ENCODE measurements at regions of chr15 and their contacts with region 1.

Region 1: DNA sequence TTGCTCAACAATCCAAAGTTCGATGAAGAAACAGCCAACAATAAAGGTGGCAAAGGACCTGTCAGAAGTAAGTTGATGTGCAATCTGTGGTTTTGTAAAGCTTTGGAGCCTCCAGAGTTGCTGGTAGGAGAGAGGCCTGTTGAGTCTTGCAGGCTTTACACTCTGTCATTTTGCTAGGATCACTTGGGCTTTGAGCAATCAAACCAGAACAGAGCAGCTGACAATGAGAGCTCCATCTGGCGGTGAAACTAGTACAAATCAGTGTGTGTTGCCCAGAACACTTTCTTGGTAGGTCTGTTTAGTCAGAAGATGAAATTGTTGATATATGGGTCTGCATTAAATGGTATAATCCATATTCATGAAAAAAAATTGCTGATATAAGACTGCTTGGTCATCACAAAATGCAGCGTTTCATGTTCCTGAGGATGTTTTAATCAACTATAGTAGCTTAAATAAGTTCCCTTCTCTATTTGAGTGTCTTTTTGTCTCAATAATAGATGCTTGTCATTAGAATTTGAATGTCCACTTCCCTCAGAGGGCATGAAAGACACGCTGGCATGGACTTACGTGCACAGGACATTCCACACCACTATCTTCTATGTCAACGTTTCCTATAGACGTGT is 25.7 kb downstream of the TMOD2 start:
- DNase-seq: peak; percentile 32 to 83 (median 50)
- ATAC-seq: peak; percentile 85
- H3K4me3 ChIP-seq: no peak overlapping the region
- H3K4me3 Mint-ChIP-seq: no peak overlapping the region
- H3K27ac ChIP-seq: no peak overlapping the region
- H3K27ac Mint-ChIP-seq: no peak overlapping the region
- H3K4me1 ChIP-seq: no peaks in the 10 kb centered on the region
- H3K4me1 Mint-ChIP-seq: peaks cover 9% of the 10 kb centered on the region
- H3K27me3 ChIP-seq: no peaks in the 10 kb centered on the region
- H3K27me3 Mint-ChIP-seq: no peaks in the 10 kb centered on the region
- CTCF ChIP-seq: peak; percentile 70

Region 2: DNA sequence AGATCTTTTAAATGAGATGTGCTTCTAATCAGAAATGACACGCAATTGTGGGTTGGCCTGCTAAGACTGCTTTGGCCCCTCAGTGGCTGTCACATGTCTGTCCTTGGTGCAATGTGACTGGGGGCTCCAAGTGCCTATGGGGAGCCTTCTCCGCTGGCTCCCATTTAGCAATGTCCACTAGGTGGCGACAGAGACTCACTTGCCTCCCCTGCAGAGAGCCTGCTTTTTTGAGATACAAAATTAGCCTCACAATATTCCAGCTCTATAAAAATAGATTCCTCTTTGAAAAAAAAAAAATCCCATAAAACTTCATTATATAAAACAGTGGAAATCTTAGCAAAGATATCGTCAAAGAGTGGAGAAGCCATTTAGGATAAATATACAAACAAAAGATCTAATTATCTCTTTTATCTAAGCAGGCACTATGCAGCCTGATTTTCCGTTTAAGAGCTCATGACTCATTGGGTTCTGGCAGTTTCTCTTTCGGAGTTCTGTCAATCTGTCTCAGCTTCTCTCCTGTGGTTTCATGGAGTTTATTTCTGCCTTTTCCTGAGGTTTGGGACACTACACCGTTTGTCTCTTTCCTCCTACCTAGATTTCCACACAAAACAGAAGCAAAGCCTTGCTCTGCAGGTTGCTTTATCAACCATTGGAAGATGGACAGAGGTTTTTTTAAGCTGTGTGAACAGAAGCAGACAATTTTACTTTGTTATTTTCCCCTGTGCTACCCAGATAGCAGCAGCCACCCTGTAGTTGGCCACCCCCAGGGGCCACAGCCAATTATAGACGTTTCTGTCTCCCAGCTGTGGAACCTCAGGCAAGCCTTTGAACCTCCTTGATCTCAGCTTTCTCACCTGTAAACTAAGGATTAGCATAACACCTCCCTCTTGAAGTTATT is 613.9 kb before region 1 on chr15:
- CTCF ChIA-PET with region 1: interaction called, 5 read pairs
- POLR2A ChIA-PET with region 1: no interaction called
- intact Hi-C with region 1: loop called in 1 of 2 experiments (anchors 5 kb)
- DNase-seq: peak; percentile 14 to 73 (median 32)
- ATAC-seq: peak; percentile 59
- H3K4me3 ChIP-seq: no peak overlapping the region
- H3K4me3 Mint-ChIP-seq: no peak overlapping the region
- H3K27ac ChIP-seq: no peak overlapping the region
- H3K27ac Mint-ChIP-seq: no peak overlapping the region
- H3K4me1 ChIP-seq: no peaks in the 10 kb centered on the region
- H3K4me1 Mint-ChIP-seq: no peaks in the 10 kb centered on the region
- H3K27me3 ChIP-seq: peaks cover 12 to 27% of the 10 kb centered on the region in 2 experiments
- H3K27me3 Mint-ChIP-seq: peaks cover 33% of the 10 kb centered on the region
- CTCF ChIP-seq: peak; percentile 95

Region 3: GRCh38 chr15:51649659-51650521 is 127.2 kb before region 1 on chr15:
- CTCF ChIA-PET with region 1: interaction called, 179 read pairs
- POLR2A ChIA-PET with region 1: interaction called, 32 read pairs
- intact Hi-C with region 1: loop called (anchors 1 kb)
- DNase-seq: peak in 11 of 14 experiments; percentile 3 to 85 (median 37)
- ATAC-seq: peak; percentile 81
- H3K4me3 ChIP-seq: no peak overlapping the region
- H3K4me3 Mint-ChIP-seq: no peak overlapping the region
- H3K27ac ChIP-seq: no peak overlapping the region
- H3K27ac Mint-ChIP-seq: no peak overlapping the region
- H3K4me1 ChIP-seq: no peaks in the 10 kb centered on the region
- H3K4me1 Mint-ChIP-seq: no peaks in the 10 kb centered on the region
- H3K27me3 ChIP-seq: no peaks in the 10 kb centered on the region
- H3K27me3 Mint-ChIP-seq: no peaks in the 10 kb centered on the region
- CTCF ChIP-seq: peak; percentile 90

Region 4: DNA sequence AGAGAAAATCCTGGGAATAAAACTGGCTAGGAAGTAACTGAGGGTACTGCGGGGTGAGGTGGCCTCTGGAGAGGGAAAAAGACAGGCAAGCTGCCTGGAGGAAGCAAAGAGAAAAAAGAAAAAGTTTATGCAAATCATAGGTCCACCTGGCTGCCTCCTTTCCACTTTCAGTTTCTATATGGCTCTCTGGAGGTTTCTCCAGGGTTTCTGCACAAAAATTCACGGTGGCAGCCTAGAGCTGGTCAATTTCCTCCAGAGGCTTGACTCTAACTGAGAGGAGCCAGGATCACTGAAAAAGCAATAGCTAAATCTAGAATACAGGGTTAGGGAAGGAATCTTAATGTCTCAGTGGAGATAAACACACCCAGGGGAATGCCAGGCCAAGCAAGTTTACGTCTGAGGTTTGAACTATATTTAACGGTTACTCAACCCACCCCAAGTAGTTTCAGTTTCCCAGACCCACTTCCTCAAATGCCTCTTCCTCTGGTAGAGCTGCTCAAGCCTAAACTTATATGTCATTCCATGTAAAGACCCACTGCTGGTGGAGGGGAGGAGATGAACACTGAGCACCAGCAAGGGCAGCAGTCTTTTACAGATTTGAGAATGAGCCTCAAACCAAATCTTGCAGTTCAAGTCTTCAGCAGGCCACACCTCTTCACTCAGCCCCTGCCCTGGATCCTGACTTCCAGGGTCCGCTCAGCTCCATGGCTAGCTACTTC is 45.4 kb before region 1 on chr15:
- CTCF ChIA-PET with region 1: interaction called, 34 read pairs
- POLR2A ChIA-PET with region 1: interaction called, 15 read pairs
- intact Hi-C with region 1: loop called in 1 of 2 experiments (anchors 2 kb)
- DNase-seq: peak in 11 of 14 experiments; percentile 10 to 84 (median 24)
- ATAC-seq: peak; percentile 66
- H3K4me3 ChIP-seq: peak overlapping the region; percentile 47
- H3K4me3 Mint-ChIP-seq: peak overlapping the region; percentile 85
- H3K27ac ChIP-seq: peak overlapping the region; percentile 84 to 90
- H3K27ac Mint-ChIP-seq: peak overlapping the region; percentile 93
- H3K4me1 ChIP-seq: peaks cover 75% of the 10 kb centered on the region
- H3K4me1 Mint-ChIP-seq: peaks cover 81% of the 10 kb centered on the region
- H3K27me3 ChIP-seq: no peaks in the 10 kb centered on the region
- H3K27me3 Mint-ChIP-seq: no peaks in the 10 kb centered on the region
- CTCF ChIP-seq: no peak

Region 5: DNA sequence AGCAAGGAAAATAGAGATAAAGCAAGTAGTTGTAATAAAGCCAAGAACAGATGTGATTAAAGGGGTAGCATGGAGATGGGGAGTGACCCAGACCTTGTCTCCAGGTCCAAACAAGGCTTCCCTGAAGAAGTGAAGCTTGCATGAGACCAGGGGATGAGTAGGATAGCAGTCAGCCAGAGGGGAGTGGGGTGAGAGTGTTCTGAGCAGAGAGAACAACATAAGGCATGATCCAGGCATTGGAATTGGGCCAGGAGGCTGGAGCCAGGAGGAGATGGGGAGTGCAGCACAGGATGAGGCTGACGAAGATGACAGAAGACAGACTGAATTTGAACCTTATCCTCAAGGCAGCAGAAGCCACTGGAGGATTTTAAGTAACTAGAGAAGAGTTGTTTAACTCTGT is 18.4 kb before region 1 on chr15:
- CTCF ChIA-PET with region 1: interaction called, 26 read pairs
- POLR2A ChIA-PET with region 1: no interaction called
- intact Hi-C with region 1: no loop called
- DNase-seq: no peak
- ATAC-seq: no peak
- H3K4me3 ChIP-seq: no peak overlapping the region
- H3K4me3 Mint-ChIP-seq: no peak overlapping the region
- H3K27ac ChIP-seq: no peak overlapping the region
- H3K27ac Mint-ChIP-seq: no peak overlapping the region
- H3K4me1 ChIP-seq: no peaks in the 10 kb centered on the region
- H3K4me1 Mint-ChIP-seq: peaks cover 22% of the 10 kb centered on the region
- H3K27me3 ChIP-seq: no peaks in the 10 kb centered on the region
- H3K27me3 Mint-ChIP-seq: no peaks in the 10 kb centered on the region
- CTCF ChIP-seq: no peak

Measured in CD4-positive, alpha-beta T cell (primary cell).